ENCODE measurements at regions of chr10 and their contacts with region 1.

Region 1: GRCh38 chr10:102114861-102115618 is 5.1 kb downstream of the LDB1 start:
- DNase-seq: peak; percentile 57 to 88 (median 76)
- ATAC-seq: peak; percentile 61 to 66
- H3K4me3 Mint-ChIP-seq: peak overlapping the region; percentile 83 to 97 (median 94)
- H3K27ac Mint-ChIP-seq: peak overlapping the region; percentile 77 to 99 (median 95)
- H3K4me1 Mint-ChIP-seq: peaks cover 34 to 81% (median 69%) of the 10 kb centered on the region in 4 donors
- H3K27me3 Mint-ChIP-seq: no peaks in the 10 kb centered on the region

Region 2: GRCh38 chr10:102033787-102034186 is 81.3 kb before region 1 on chr10:
- POLR2A ChIA-PET with region 1: no interaction called
- DNase-seq: no peak
- ATAC-seq: no peak
- H3K4me3 Mint-ChIP-seq: no peak overlapping the region
- H3K27ac Mint-ChIP-seq: no peak overlapping the region
- H3K4me1 Mint-ChIP-seq: no peaks in the 10 kb centered on the region
- H3K27me3 Mint-ChIP-seq: no peaks in the 10 kb centered on the region

Region 3: DNA sequence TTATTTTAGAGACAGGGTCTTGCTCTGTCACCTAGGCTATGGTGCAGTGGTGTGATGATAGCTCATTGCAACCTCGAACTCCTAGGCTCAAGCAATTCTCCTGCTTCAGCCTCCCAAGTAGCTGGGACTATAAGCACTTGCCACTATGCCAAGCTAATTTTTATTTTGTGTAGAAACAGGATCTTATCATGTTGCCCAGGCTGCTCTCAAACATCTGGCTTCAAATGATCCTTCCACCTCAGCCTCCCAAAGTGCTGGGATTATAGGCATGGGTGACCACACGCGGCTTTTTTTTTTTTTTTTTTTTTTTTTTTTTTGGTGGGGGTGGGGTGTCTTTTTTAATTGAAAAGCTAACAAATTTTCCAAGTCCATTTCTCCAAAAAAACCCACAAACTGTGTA is 31.5 kb before region 1 on chr10:
- POLR2A ChIA-PET with region 1: no interaction called
- DNase-seq: no peak
- ATAC-seq: no peak
- H3K4me3 Mint-ChIP-seq: no peak overlapping the region
- H3K27ac Mint-ChIP-seq: no peak overlapping the region
- H3K4me1 Mint-ChIP-seq: peaks cover 0 to 3% (median 0%) of the 10 kb centered on the region in 4 donors
- H3K27me3 Mint-ChIP-seq: no peaks in the 10 kb centered on the region

Region 4: DNA sequence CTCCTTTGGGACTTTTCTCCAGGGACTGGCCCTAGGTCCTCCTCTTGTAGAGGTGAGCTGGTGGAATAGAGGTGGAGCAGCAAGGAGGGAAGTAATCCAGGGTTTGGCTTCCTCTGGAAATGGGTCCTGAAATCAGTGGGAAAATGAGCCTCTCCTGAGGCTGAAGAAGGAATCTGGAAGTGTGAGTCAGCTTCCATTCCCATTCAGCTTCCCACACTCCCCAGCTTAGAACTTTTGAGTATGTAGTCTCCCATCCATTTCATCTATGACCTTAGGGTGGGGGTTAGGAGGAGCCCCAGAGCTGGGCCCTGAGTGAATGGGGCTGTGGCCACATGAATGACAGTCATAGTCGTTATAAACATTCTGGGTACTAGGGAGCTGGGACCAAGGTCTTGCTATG is 12.6 kb before region 1 on chr10:
- POLR2A ChIA-PET with region 1: interaction called, 10 read pairs
- DNase-seq: no peak
- ATAC-seq: no peak
- H3K4me3 Mint-ChIP-seq: no peak overlapping the region
- H3K27ac Mint-ChIP-seq: peak overlapping the region in 1 of 10 donors; percentile 43
- H3K4me1 Mint-ChIP-seq: peaks cover 14 to 22% (median 21%) of the 10 kb centered on the region in 4 donors
- H3K27me3 Mint-ChIP-seq: no peaks in the 10 kb centered on the region

Region 5: GRCh38 chr10:102132563-102133372 is 17.7 kb after region 1 on chr10 and contains the start of gene PPRC1:
- POLR2A ChIA-PET with region 1: interaction called, 32 read pairs
- DNase-seq: peak; percentile 91 to 98 (median 97)
- ATAC-seq: peak; percentile 93 to 94
- H3K4me3 Mint-ChIP-seq: peak within 1 kb of the TSS; percentile 96 to 100 (median 99)
- H3K27ac Mint-ChIP-seq: peak within 1 kb of the TSS; percentile 90 to 99 (median 98)
- H3K4me1 Mint-ChIP-seq: peaks cover 28 to 49% (median 44%) of the 10 kb centered on the region in 4 donors
- H3K27me3 Mint-ChIP-seq: no peaks in the 10 kb centered on the region
- polyA plus RNA-seq, gene PPRC1: 6.2 to 23.7 (median 13.5) TPM